CD8-positive, alpha-beta T cell (primary cell): ENCODE measurements at regions of chr9 and their contacts with region 1.

Region 1: DNA sequence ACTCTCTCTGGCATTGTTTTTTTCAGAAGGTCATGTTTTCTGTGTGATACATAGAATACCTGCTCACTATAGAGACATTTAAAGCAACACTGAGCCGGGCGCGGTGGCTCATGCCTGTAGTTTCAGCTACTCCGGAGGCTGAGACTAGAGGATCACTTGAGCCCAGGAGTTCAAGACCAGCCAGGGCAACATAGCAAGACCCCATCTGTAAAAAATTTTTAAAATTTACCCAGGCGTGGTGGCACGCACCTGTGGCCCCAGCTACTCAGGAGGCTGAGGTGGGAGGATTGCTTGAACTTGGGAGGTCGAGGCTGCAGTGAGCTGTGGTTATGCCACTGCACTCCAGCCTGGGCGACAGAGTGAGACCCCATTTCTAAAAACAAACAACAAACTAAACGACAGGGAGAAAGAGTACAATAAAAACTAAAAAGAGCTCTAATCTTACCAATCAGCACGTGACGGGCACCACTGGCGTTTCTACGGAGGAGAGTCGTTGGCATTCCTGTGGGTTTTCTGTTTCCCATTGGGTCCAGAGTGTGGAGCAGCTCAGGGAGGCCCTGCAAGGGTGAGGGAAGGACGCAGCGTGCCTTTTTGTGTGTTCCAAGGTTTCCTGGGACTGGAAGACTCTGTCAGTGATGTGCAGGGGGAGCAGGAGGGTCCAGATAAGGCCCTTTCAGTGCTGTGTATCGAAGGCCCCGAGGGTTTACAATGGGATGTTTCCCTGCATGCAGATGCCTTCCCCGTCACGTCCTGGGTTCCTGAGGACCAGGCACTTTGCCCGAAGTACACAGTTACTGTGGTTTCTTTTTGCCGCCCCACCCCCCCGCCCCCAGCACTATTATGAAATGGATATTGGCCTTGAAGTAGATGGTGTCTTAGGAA is 7.2 kb upstream of the RNU6ATAC start:
- DNase-seq: peak in 1 of 9 experiments; percentile 16
- ATAC-seq: no peak
- H3K4me3 ChIP-seq: no peak overlapping the region
- H3K4me3 Mint-ChIP-seq: no peak overlapping the region
- H3K27ac ChIP-seq: no peak overlapping the region
- H3K27ac Mint-ChIP-seq: no peak overlapping the region
- H3K4me1 ChIP-seq: no peaks in the 10 kb centered on the region
- H3K4me1 Mint-ChIP-seq: no peaks in the 10 kb centered on the region
- H3K27me3 ChIP-seq: no peaks in the 10 kb centered on the region
- H3K27me3 Mint-ChIP-seq: no peaks in the 10 kb centered on the region
- CTCF ChIP-seq: no peak

Region 2: GRCh38 chr9:134185536-134186011 is 14.0 kb after region 1 on chr9:
- CTCF ChIA-PET with region 1: interaction called, 26 read pairs
- POLR2A ChIA-PET with region 1: no interaction called
- intact Hi-C with region 1: no loop called
- DNase-seq: peak in 3 of 9 experiments; percentile 63 to 84 (median 72)
- ATAC-seq: peak; percentile 81
- H3K4me3 ChIP-seq: no peak overlapping the region
- H3K4me3 Mint-ChIP-seq: peak overlapping the region; percentile 22
- H3K27ac ChIP-seq: peak overlapping the region; percentile 4 to 49
- H3K27ac Mint-ChIP-seq: peak overlapping the region; percentile 88
- H3K4me1 ChIP-seq: peaks cover 26% of the 10 kb centered on the region
- H3K4me1 Mint-ChIP-seq: peaks cover 33% of the 10 kb centered on the region
- H3K27me3 ChIP-seq: peaks cover 0 to 8% of the 10 kb centered on the region in 2 experiments
- H3K27me3 Mint-ChIP-seq: no peaks in the 10 kb centered on the region
- CTCF ChIP-seq: no peak

Region 3: GRCh38 chr9:134196911-134197310 is 25.4 kb after region 1 on chr9:
- CTCF ChIA-PET with region 1: interaction called, 15 read pairs
- POLR2A ChIA-PET with region 1: no interaction called
- intact Hi-C with region 1: no loop called
- DNase-seq: no peak
- ATAC-seq: no peak
- H3K4me3 ChIP-seq: no peak overlapping the region
- H3K4me3 Mint-ChIP-seq: no peak overlapping the region
- H3K27ac ChIP-seq: no peak overlapping the region
- H3K27ac Mint-ChIP-seq: no peak overlapping the region
- H3K4me1 ChIP-seq: peaks cover 11% of the 10 kb centered on the region
- H3K4me1 Mint-ChIP-seq: peaks cover 18% of the 10 kb centered on the region
- H3K27me3 ChIP-seq: no peaks in the 10 kb centered on the region
- H3K27me3 Mint-ChIP-seq: no peaks in the 10 kb centered on the region
- CTCF ChIP-seq: no peak

Region 4: DNA sequence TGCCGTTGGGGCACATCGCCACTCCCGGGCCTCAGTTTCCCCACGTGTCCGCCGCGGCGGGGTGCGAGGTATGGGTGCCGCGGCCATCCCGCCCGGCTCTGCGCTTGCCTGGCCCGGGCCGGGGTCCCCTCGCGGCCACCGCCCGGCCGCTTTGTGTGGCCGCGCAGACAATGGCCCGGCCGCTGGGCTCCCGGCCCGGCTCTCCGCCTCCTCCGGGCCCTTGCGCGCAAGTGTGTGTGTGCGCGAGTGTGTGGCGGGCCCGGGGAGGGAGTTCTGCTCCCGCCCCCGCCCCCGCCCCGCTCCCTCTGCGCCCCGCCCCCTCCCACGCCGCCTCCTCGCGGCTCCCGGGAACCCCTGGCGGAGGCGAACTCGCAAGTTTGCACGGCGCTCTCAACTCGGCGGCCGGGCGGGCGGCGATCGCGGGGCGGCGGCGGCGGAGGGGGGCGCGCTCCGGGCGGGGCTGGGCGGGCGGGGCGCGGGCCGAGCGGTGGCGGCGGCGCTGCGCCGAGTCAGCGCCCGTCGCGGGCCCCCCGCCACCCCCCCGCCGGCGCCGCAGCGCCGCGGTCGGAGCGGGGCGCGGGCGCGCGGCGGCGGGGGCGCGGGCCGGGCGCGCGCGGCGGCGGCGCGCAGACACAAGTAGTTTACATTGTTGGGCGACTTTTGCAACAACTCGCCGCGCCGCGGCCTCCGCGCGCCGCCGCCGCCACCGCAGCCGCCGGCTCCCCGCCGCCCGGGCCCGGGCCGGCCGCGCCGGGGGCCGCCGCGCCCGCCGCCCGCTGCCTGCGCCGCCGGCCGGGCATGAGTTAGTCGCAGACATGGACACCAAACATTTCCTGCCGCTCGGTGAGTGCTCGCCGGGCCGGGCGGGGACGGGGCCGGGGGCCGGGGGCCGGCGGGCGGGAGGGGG is 154.5 kb after region 1 on chr9 and contains the start of gene RXRA:
- CTCF ChIA-PET with region 1: interaction called, 3 read pairs
- POLR2A ChIA-PET with region 1: no interaction called
- intact Hi-C with region 1: loop called in 1 of 2 experiments (anchors 1 kb)
- DNase-seq: peak; percentile 37 to 87 (median 74)
- ATAC-seq: peak; percentile 69
- H3K4me3 ChIP-seq: peak within 1 kb of the TSS; percentile 68 to 93
- H3K4me3 Mint-ChIP-seq: peak within 1 kb of the TSS; percentile 75
- H3K27ac ChIP-seq: peak within 1 kb of the TSS in 1 of 2 experiments; percentile 33
- H3K27ac Mint-ChIP-seq: no peak within 1 kb of the TSS
- H3K4me1 ChIP-seq: peaks cover 16% of the 10 kb centered on the region
- H3K4me1 Mint-ChIP-seq: peaks cover 2% of the 10 kb centered on the region
- H3K27me3 ChIP-seq: no peaks in the 10 kb centered on the region
- H3K27me3 Mint-ChIP-seq: no peaks in the 10 kb centered on the region
- CTCF ChIP-seq: no peak
- total RNA-seq, gene RXRA: 11.6 to 13.7 TPM

Region 5: DNA sequence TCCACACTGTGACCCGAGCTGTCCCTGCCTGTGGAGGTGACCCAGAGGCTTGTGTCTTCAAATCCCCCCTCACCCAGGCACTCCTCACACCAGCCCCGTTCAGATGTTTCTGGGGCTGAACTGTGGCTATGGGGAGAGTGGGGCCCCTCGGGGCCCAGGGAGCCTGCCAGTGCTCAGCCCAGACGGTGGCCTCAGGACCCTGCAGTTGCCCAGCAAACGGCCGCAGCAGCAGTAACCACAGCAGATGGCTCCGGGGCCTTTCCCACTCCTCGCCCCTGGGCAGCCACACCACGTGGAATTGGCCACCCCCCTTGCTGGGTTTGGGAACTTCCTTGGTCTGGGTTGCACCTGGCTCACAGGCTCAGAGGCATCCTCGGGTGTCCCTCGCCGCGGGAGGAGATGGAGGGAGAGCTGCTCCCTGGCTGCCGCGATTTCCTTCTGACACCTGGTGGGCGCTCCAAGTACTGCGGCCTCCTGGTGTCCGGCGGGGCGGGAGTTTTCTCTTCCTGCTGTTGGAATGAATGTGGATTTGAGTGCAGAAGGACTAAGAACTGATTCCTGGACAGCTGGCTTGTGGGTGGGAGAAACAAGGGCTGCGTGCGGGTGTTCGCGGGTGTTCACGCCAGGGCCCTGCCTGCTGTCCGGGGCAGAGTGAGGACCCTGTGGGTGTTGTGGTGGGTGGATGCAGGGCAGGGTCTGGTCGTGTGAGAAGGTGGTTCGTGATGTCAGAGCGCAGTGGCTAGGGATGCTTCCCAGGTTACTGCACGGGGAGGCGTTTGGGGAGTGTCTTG is 567.5 kb after region 1 on chr9:
- CTCF ChIA-PET with region 1: no interaction called
- POLR2A ChIA-PET with region 1: no interaction called
- intact Hi-C with region 1: loop called in 1 of 2 experiments (anchors 1 kb)
- DNase-seq: peak in 7 of 9 experiments; percentile 11 to 57 (median 35)
- ATAC-seq: no peak
- H3K4me3 ChIP-seq: no peak overlapping the region
- H3K4me3 Mint-ChIP-seq: no peak overlapping the region
- H3K27ac ChIP-seq: no peak overlapping the region
- H3K27ac Mint-ChIP-seq: no peak overlapping the region
- H3K4me1 ChIP-seq: no peaks in the 10 kb centered on the region
- H3K4me1 Mint-ChIP-seq: no peaks in the 10 kb centered on the region
- H3K27me3 ChIP-seq: no peaks in the 10 kb centered on the region
- H3K27me3 Mint-ChIP-seq: peaks cover 4% of the 10 kb centered on the region
- CTCF ChIP-seq: peak; percentile 51